ENCODE measurements at regions of chr11 and their contacts with region 1.

Region 1: GRCh38 chr11:9219572-9219971 is 45.6 kb downstream of the DENND5A start:
- DNase-seq: no peak
- H3K4me3 Mint-ChIP-seq: no peak overlapping the region
- H3K27ac Mint-ChIP-seq: no peak overlapping the region
- H3K4me1 Mint-ChIP-seq: peaks cover 21% of the 10 kb centered on the region
- H3K27me3 Mint-ChIP-seq: no peaks in the 10 kb centered on the region

Region 2: GRCh38 chr11:8661001-8661795 is 558.4 kb before region 1 on chr11:
- CTCF ChIA-PET with region 1: no interaction called
- POLR2A ChIA-PET with region 1: no interaction called
- DNase-seq: no peak
- H3K4me3 Mint-ChIP-seq: no peak overlapping the region
- H3K27ac Mint-ChIP-seq: no peak overlapping the region
- H3K4me1 Mint-ChIP-seq: no peaks in the 10 kb centered on the region
- H3K27me3 Mint-ChIP-seq: no peaks in the 10 kb centered on the region

Region 3: DNA sequence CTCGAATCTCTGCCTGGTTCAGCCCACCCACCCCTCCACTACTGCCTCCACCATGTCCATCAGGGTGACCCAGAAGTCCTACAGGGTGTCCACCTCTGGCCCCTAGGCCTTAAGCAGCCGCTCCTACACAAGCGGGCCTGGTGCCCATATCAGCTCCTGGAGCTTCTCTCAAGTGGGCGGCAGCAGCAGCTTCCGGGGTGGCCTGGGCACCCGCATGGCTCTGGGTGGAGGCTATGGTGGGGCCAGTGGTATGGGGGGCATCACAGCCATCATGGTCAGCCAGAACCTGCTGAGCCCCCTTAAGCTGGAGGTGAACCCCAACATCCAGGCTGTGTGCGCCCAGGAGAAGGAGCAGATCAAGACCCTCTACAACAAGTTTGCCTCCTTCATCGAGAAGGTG is 125.2 kb before region 1 on chr11:
- CTCF ChIA-PET with region 1: no interaction called
- POLR2A ChIA-PET with region 1: no interaction called
- DNase-seq: no peak
- H3K4me3 Mint-ChIP-seq: no peak overlapping the region
- H3K27ac Mint-ChIP-seq: no peak overlapping the region
- H3K4me1 Mint-ChIP-seq: peaks cover 2% of the 10 kb centered on the region
- H3K27me3 Mint-ChIP-seq: peaks cover 44% of the 10 kb centered on the region

Region 4: DNA sequence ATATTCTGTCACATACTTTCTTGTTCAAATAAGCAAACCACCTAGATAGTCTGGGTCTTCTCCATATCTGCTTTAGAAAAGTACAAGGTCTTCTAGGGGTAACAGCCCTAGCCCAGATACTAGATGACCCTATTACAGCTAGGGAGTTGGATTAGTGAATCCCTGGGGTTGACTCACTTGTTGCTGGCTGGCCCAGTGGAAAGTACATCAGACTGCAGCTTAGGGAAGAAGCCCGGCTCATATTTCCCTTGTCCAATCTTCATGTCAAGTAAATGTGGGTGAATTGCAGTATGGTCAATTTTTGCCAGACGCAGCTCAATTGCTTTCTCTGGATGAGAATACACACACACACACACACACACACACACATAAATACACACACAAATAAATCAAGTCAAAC is 49.1 kb before region 1 on chr11:
- CTCF ChIA-PET with region 1: no interaction called
- POLR2A ChIA-PET with region 1: interaction called, 11 read pairs
- DNase-seq: no peak
- H3K4me3 Mint-ChIP-seq: no peak overlapping the region
- H3K27ac Mint-ChIP-seq: no peak overlapping the region
- H3K4me1 Mint-ChIP-seq: peaks cover 16% of the 10 kb centered on the region
- H3K27me3 Mint-ChIP-seq: no peaks in the 10 kb centered on the region